ENCODE measurements at regions of chr3 and their contacts with region 1.

Region 1: DNA sequence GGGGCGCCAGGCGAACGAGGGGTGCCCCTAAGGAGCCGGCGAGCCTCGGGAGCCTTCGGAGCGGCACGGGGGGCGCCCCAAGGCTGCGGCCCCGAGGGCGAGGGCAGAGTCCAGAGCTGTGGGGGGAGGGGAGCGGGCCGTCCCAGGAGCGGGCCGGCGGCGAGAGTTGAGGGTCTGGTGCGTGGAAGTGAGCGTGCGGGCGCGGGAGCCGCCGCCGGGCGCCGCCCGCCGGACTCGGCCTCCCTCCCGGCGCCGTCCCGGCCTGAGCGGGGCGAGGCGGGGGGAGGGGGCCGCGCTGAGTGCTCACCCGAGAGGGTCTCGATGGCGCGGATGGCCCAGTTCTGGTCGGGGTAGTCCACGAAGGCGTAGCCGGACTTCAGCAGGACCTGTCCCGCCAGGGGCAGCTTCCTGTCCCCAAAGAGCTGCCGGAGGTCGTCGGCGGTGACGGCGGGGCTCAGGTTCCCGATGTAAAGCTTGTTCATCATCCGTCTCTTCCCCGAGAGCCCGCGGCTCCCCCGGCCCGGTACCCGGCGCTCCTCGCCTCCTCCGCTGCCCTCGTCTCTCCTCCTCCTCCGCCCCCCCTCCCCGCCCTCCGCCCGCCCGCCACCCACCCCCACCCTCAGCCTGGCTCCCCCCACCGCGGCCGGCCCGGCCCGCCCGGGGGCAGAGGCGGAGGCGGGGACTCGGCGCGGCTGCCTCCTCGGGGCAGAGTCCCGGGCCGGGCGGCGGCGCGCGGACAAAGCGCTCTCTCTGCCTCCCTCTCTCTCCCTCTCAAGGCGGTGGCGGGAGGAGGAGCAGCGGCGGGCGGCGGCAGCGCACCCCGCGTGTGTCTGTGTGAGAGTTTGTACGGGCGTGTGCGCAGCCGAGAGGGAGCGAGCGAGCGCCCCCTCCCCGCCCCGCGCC is at the start of gene IGF2BP2:
- H3K4me3 ChIP-seq: peak within 1 kb of the TSS; percentile 94
- H3K27ac ChIP-seq: peak within 1 kb of the TSS; percentile 94
- H3K4me1 ChIP-seq: 0 out of 2 replicates have a peak, but pooled peaks cover 4% of the 10 kb centered on the region
- CTCF ChIP-seq: peak; percentile 46

Region 2: GRCh38 chr3:185937689-185938463 is 113.1 kb after region 1 on chr3 and contains the start of gene TRA2B:
- CTCF ChIA-PET with region 1: interaction called, 9 read pairs
- POLR2A ChIA-PET with region 1: interaction called, 26 read pairs
- H3K4me3 ChIP-seq: peak within 1 kb of the TSS; percentile 98
- H3K27ac ChIP-seq: peak within 1 kb of the TSS; percentile 97
- H3K4me1 ChIP-seq: no peaks in the 10 kb centered on the region
- CTCF ChIP-seq: peak; percentile 21; the same call in 1 of the 2 replicates